Ovary (tissue), 10 donors: ENCODE measurements at regions of chr1 and their contacts with region 1.

Region 1: DNA sequence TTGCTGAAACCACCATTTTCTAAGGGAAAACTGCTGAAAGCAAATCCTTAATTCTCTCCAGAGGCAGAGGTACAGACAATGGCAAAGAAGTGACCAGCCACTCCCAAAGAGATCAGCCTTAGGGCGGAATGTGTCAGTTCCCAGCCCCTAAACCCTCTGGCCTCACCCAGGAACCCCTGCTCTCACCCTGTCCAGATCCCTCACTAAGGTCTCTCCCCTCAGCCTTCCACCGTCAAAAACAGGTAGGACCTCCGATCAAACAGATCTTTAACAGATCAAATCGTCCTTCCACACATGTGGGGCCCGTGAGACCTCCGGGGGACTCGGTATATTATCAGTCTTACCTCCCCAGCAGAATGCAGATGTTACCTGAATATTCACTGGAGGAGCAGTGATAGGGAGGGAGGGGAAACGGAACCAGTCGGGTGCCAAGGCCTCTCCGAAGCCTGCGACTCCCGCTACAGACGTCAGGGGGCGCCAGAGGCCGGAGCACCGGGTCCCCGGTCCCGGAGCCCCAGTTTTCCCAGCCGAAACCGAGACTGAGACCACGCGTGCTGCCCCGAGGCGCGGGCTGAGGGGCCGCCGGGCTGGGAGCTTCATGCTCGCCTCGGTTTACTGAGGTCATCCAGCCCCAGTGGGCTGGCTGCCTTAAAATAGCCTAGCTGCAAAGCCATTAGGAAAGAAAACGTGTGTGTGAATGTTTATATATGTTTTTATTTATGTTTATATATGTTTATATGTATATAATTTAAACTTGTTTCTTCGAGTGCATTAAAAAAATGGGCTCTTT is 23.6 kb downstream of the GPA33 start:
- DNase-seq: peak; percentile 45 to 84 (median 75)
- H3K4me3 ChIP-seq: no peak overlapping the region
- H3K27ac ChIP-seq: no peak overlapping the region
- H3K4me1 ChIP-seq: no peaks in the 10 kb centered on the region
- H3K27me3 ChIP-seq: no peaks in the 10 kb centered on the region
- CTCF ChIP-seq: peak; percentile 72 to 78 (median 76)
- EP300 ChIP-seq: no peak
- POLR2A ChIP-seq: no peak

Region 2: DNA sequence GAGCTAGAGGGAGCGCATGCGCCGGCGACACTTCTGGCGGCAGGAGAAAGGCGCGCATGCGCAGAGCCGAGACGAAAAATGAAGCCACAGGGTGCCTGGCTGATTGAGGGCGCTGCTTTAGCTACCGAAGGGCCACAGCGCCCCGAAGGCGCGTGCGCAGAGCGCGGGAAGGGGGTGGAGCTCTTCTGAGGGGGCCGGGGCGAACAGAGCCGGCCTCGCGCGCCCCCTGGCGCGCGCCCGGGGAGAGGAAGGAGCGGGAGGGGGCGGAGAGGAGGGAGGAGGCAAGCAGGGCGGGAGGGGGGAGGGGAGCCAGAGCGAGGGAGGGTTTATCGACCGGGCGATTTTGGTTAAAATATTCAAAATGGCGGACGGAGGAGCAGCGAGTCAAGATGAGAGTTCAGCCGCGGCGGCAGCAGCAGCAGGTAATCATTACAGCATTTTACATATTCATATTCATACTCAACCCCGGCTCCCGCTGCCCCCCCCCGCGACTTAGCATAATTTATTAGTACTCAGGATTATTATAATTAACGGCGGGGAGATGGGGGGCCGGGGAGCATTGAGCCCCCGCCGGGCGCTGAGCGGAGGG is 154.1 kb after region 1 on chr1 and contains the start of gene POU2F1:
- intact Hi-C with region 1: loop called in 1 of 4 experiments (anchors 10 kb)
- DNase-seq: peak; percentile 99 to 100 (median 99)
- H3K4me3 ChIP-seq: peak within 1 kb of the TSS; percentile 94
- H3K27ac ChIP-seq: peak within 1 kb of the TSS; percentile 88 to 97
- H3K4me1 ChIP-seq: peaks cover 1% of the 10 kb centered on the region
- H3K27me3 ChIP-seq: no peaks in the 10 kb centered on the region
- CTCF ChIP-seq: peak; percentile 35 to 64 (median 63)
- EP300 ChIP-seq: no peak
- POLR2A ChIP-seq: peak; percentile 49
- total RNA-seq, gene POU2F1: 11.4 to 24.6 (median 20.4) TPM

Region 3: DNA sequence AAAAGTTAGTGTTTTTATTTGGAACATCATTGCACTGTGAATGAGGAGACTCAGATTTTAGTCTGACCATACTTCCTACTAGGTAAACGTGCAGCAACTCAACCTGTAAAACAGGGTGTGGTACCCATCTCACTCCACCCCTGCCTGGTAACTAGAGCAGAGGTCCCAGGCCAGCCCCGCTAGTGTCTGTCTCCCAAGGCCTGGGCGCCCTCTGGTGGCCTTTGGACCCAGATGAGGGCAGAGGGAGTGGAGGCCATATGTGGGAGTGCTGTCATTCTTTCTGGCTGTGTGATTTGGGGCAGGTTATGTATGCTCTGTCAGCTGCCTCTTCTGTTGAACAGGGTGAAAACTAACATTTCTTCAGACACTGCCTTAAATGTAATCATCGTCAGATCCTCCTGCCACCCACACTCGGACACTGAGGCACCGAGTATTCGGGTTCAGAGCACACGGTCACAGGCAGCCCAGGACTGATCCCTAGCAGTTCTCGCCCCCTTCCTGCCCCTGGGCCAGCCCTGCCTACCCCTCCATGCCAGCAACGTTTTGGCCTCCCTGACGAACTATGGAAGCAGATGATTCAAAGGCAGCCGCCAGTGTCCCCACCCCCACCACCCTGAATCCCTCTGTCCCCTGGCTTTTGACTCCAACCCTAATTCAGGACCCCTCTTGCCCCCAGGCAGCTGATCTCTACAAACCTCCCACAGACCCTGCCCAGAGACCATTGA is 375.8 kb after region 1 on chr1:
- intact Hi-C with region 1: loop called (anchors 5 kb)
- DNase-seq: peak; percentile 63 to 84 (median 77)
- H3K4me3 ChIP-seq: no peak overlapping the region
- H3K27ac ChIP-seq: no peak overlapping the region
- H3K4me1 ChIP-seq: no peaks in the 10 kb centered on the region
- H3K27me3 ChIP-seq: no peaks in the 10 kb centered on the region
- CTCF ChIP-seq: peak; percentile 55 to 70 (median 58)
- EP300 ChIP-seq: no peak
- POLR2A ChIP-seq: no peak

Region 4: GRCh38 chr1:167533851-167534300 is 467.3 kb after region 1 on chr1:
- intact Hi-C with region 1: loop called (anchors 5 to 10 kb)
- DNase-seq: peak; percentile 39 to 75 (median 64)
- H3K4me3 ChIP-seq: no peak overlapping the region
- H3K27ac ChIP-seq: no peak overlapping the region
- H3K4me1 ChIP-seq: no peaks in the 10 kb centered on the region
- H3K27me3 ChIP-seq: no peaks in the 10 kb centered on the region
- CTCF ChIP-seq: peak; percentile 27 to 57 (median 54)
- EP300 ChIP-seq: no peak
- POLR2A ChIP-seq: no peak

Region 5: DNA sequence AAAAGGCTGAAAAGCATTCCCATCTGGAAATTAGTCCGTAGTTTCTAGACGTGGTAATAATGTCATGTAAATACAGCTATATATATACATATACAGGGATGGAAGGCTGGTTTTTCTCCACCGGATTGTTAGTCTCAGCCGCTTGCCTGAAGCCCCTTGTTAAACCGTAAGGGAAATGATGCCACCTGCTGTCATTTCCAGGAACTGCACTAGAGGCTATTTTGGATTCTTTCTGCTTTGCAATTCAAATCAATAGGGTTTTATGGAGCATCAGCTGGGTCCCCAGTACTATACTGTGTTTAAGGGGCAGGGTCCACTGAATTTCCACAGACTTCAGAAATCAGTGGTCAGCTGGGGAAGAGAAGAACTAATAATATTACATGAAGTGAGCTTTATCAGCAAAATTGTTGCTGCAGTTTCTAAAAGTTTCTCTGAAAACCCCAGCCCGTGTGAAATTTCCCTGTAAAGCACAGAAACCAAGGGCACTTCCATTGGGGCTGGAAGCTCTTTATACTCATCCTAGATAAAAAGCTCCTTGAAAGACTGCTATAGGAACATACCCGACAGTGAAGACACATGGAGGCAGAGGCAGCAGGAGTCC is 621.5 kb after region 1 on chr1:
- intact Hi-C with region 1: loop called in 1 of 4 experiments (anchors 5 kb)
- DNase-seq: peak; percentile 39 to 82 (median 51)
- H3K4me3 ChIP-seq: no peak overlapping the region
- H3K27ac ChIP-seq: no peak overlapping the region
- H3K4me1 ChIP-seq: peaks cover 5% of the 10 kb centered on the region
- H3K27me3 ChIP-seq: no peaks in the 10 kb centered on the region
- CTCF ChIP-seq: peak; percentile 55 to 74 (median 64)
- EP300 ChIP-seq: no peak
- POLR2A ChIP-seq: no peak